B cell (primary cell): ENCODE measurements at regions of chr12 and their contacts with region 1.

Region 1: GRCh38 chr12:4276524-4277204 is 3.1 kb downstream of the CCND2 start:
- DNase-seq: peak; percentile 91
- ATAC-seq: peak; percentile 40
- H3K4me3 ChIP-seq: no peak overlapping the region
- H3K4me3 Mint-ChIP-seq: peak overlapping the region; percentile 99
- H3K27ac ChIP-seq: no peak overlapping the region
- H3K27ac Mint-ChIP-seq: peak overlapping the region; percentile 2
- H3K4me1 ChIP-seq: peaks cover 18 to 37% of the 10 kb centered on the region in 2 donors
- H3K4me1 Mint-ChIP-seq: peaks cover 32% of the 10 kb centered on the region
- H3K27me3 ChIP-seq: no peaks in the 10 kb centered on the region
- H3K27me3 Mint-ChIP-seq: no peaks in the 10 kb centered on the region
- CTCF ChIP-seq: peak; percentile 85

Region 2: GRCh38 chr12:3885277-3886094 is 391.2 kb before region 1 on chr12:
- CTCF ChIA-PET with region 1: interaction called, 396 read pairs
- POLR2A ChIA-PET with region 1: interaction called, 11 read pairs
- intact Hi-C with region 1: no loop called
- DNase-seq: peak; percentile 72
- ATAC-seq: no peak
- H3K4me3 ChIP-seq: no peak overlapping the region
- H3K4me3 Mint-ChIP-seq: no peak overlapping the region
- H3K27ac ChIP-seq: no peak overlapping the region
- H3K27ac Mint-ChIP-seq: no peak overlapping the region
- H3K4me1 ChIP-seq: peaks cover 2 to 7% of the 10 kb centered on the region in 2 donors
- H3K4me1 Mint-ChIP-seq: peaks cover 4% of the 10 kb centered on the region
- H3K27me3 ChIP-seq: peaks cover 0 to 13% (median 6%) of the 10 kb centered on the region in 4 experiments
- H3K27me3 Mint-ChIP-seq: peaks cover 8% of the 10 kb centered on the region
- CTCF ChIP-seq: peak; percentile 88

Region 3: GRCh38 chr12:3998968-3999826 is 277.5 kb before region 1 on chr12:
- CTCF ChIA-PET with region 1: interaction called, 293 read pairs
- POLR2A ChIA-PET with region 1: no interaction called
- intact Hi-C with region 1: loop called (anchors 1 kb)
- DNase-seq: no peak
- ATAC-seq: no peak
- H3K4me3 ChIP-seq: no peak overlapping the region
- H3K4me3 Mint-ChIP-seq: no peak overlapping the region
- H3K27ac ChIP-seq: no peak overlapping the region
- H3K27ac Mint-ChIP-seq: no peak overlapping the region
- H3K4me1 ChIP-seq: peaks cover 4 to 7% of the 10 kb centered on the region in 2 donors
- H3K4me1 Mint-ChIP-seq: peaks cover 4% of the 10 kb centered on the region
- H3K27me3 ChIP-seq: peaks cover 0 to 3% (median under 1%) of the 10 kb centered on the region in 4 experiments
- H3K27me3 Mint-ChIP-seq: peaks cover 4% of the 10 kb centered on the region
- CTCF ChIP-seq: no peak

Region 4: GRCh38 chr12:4112734-4113325 is 163.8 kb before region 1 on chr12:
- CTCF ChIA-PET with region 1: interaction called, 136 read pairs
- POLR2A ChIA-PET with region 1: interaction called, 28 read pairs
- intact Hi-C with region 1: no loop called
- DNase-seq: no peak
- ATAC-seq: no peak
- H3K4me3 ChIP-seq: no peak overlapping the region
- H3K4me3 Mint-ChIP-seq: no peak overlapping the region
- H3K27ac ChIP-seq: no peak overlapping the region
- H3K27ac Mint-ChIP-seq: no peak overlapping the region
- H3K4me1 ChIP-seq: peaks cover 26 to 27% of the 10 kb centered on the region in 2 donors
- H3K4me1 Mint-ChIP-seq: peaks cover 28% of the 10 kb centered on the region
- H3K27me3 ChIP-seq: peaks cover 0 to 5% (median 0%) of the 10 kb centered on the region in 4 experiments
- H3K27me3 Mint-ChIP-seq: peaks cover 4% of the 10 kb centered on the region
- CTCF ChIP-seq: no peak

Region 5: DNA sequence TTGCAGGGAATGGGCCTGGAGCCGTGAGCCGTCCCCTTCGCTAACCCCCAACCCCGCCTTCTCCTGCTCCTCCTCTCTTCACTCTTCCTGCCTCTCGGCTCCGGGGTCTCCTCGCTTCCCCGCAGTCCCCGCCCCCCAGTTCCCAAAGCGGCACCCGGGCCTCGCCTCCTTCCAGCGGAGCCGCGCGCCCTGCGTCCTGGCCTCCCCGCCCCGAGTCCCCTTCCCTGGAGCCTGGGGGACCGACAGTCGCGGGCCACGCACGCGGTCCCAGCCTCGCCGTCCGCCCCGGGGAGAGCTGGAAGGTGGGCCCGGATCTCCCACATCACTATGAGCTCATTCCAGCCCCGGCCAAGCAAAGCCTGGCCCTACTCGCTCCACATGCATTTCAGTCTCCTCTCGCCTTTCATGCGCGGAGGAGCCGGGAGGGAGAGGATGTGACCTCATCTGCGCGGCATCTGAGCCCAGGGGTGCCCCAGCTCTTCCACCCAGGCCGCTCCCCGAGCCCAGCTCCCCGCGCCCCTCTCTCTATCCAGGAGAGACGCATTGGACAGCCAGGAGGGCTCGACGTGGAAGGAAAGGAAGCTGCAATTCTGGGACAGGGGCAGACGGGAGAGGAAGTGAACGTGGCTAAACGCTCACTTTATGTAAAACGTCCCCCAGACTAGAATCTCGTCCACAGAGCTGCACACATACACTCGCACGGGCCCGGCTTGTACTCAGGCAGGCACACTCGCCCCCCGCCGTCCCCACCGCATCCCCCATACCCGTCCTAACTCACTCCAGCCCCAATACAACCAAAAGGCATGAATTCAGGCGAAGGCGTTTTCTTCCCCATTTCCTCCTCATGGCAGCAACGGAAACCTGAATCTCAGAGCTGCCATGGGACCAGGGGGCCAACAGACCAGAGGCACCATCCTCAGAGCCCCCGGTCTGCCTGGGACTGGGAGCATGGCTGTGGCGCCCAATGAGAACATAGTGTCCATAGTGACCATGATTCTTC is 111.8 kb before region 1 on chr12:
- CTCF ChIA-PET with region 1: interaction called, 14 read pairs
- POLR2A ChIA-PET with region 1: interaction called, 5 read pairs
- intact Hi-C with region 1: no loop called
- DNase-seq: peak; percentile 80
- ATAC-seq: peak; percentile 77
- H3K4me3 ChIP-seq: peak overlapping the region; percentile 4 to 75 (median 65)
- H3K4me3 Mint-ChIP-seq: peak overlapping the region; percentile 88
- H3K27ac ChIP-seq: peak overlapping the region; percentile 77 to 95
- H3K27ac Mint-ChIP-seq: peak overlapping the region; percentile 90
- H3K4me1 ChIP-seq: peaks cover 34 to 35% of the 10 kb centered on the region in 2 donors
- H3K4me1 Mint-ChIP-seq: peaks cover 40% of the 10 kb centered on the region
- H3K27me3 ChIP-seq: no peaks in the 10 kb centered on the region
- H3K27me3 Mint-ChIP-seq: no peaks in the 10 kb centered on the region
- CTCF ChIP-seq: no peak

Region 6: DNA sequence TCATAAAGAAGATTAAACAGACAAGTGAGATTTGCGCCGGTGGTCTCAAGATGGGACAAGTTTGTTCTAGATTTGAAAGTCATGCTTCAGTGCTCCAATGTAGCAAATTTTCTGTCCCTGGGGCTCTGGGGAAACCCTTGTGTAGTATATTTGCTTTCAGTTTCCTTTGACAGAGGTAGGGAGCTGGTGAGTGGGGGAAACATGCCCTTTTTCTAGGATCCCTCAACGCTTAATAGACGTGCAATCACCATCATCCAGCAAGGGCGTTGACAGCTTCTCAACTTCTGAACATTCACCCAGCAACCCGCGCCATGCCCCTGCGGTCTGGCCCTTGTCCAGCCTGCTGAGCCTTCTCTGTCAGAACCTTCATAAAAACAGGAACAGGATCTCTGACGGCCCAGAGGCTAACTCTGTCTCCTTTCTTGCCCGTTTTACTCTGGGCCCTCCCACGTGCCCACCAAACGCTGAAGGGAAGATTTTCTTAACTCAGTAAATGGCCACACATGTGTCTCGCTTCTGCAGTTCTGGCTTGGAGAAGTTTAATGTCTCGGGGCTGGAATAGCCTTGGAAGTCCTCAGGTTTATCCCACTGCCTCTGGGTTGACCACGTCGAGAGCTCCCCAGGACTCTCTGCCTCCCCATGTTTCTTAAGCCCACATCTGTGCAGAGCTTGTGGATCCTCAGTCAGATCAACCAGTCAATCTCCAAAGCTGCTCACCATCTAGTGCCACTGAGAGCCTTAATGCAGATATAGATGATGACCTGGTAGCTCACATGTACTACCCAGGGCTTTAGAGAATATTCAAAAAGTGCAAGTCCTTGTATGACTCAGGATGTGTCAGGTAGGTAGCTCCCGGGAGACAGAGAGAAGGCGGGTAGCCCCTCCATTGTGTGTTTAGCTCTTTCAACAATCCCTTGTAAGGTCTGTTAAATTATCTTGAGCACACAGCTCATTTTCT is 61.2 kb before region 1 on chr12:
- CTCF ChIA-PET with region 1: interaction called, 22 read pairs
- POLR2A ChIA-PET with region 1: no interaction called
- intact Hi-C with region 1: loop called (anchors 1 kb)
- DNase-seq: peak; percentile 91
- ATAC-seq: peak; percentile 90
- H3K4me3 ChIP-seq: peak overlapping the region; percentile 28 to 53 (median 34)
- H3K4me3 Mint-ChIP-seq: peak overlapping the region; percentile 87
- H3K27ac ChIP-seq: peak overlapping the region; percentile 89 to 94
- H3K27ac Mint-ChIP-seq: peak overlapping the region; percentile 94
- H3K4me1 ChIP-seq: peaks cover 32 to 41% of the 10 kb centered on the region in 2 donors
- H3K4me1 Mint-ChIP-seq: peaks cover 41% of the 10 kb centered on the region
- H3K27me3 ChIP-seq: no peaks in the 10 kb centered on the region
- H3K27me3 Mint-ChIP-seq: no peaks in the 10 kb centered on the region
- CTCF ChIP-seq: no peak

Region 7: GRCh38 chr12:4320853-4321701 is 44.4 kb after region 1 on chr12 and contains the start of gene TIGAR:
- CTCF ChIA-PET with region 1: interaction called, 8 read pairs
- POLR2A ChIA-PET with region 1: interaction called, 4 read pairs
- intact Hi-C with region 1: loop called (anchors 1 kb)
- DNase-seq: peak; percentile 95
- ATAC-seq: peak; percentile 97
- H3K4me3 ChIP-seq: peak within 1 kb of the TSS; percentile 69 to 98 (median 90)
- H3K4me3 Mint-ChIP-seq: peak within 1 kb of the TSS; percentile 94
- H3K27ac ChIP-seq: peak within 1 kb of the TSS; percentile 90 to 91
- H3K27ac Mint-ChIP-seq: peak within 1 kb of the TSS; percentile 88
- H3K4me1 ChIP-seq: peaks cover 26 to 30% of the 10 kb centered on the region in 2 donors
- H3K4me1 Mint-ChIP-seq: peaks cover 32% of the 10 kb centered on the region
- H3K27me3 ChIP-seq: no peaks in the 10 kb centered on the region
- H3K27me3 Mint-ChIP-seq: no peaks in the 10 kb centered on the region
- CTCF ChIP-seq: no peak
- total RNA-seq, gene TIGAR: 6.6 and 14.2 TPM in 2 replicates

Region 8: DNA sequence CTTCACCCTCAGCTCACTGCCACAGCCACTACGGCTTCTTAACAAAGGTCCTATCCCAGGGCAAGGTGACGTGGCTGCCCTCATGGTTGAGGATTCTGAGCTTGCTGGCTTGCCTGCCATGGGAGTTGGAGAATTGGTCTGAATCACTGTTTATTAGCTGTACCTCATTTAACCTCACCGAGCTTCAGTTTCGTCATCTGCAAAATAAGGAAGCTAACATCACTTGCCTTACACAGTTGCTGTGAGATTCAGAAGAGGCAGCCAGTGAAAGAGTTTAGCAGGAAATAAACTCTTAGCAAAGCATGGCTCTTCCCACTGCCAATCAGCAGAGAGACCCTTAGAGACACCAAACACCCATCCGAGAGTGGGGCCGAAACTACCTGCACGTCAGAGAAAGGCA is 543.0 kb after region 1 on chr12:
- CTCF ChIA-PET with region 1: no interaction called
- POLR2A ChIA-PET with region 1: no interaction called
- intact Hi-C with region 1: no loop called
- DNase-seq: peak; percentile 70
- ATAC-seq: peak; percentile 84
- H3K4me3 ChIP-seq: no peak overlapping the region
- H3K4me3 Mint-ChIP-seq: peak overlapping the region; percentile 67
- H3K27ac ChIP-seq: peak overlapping the region; percentile 42 to 65
- H3K27ac Mint-ChIP-seq: peak overlapping the region; percentile 86
- H3K4me1 ChIP-seq: peaks cover 54 to 64% of the 10 kb centered on the region in 2 donors
- H3K4me1 Mint-ChIP-seq: peaks cover 65% of the 10 kb centered on the region
- H3K27me3 ChIP-seq: peaks cover 0 to 7% (median 0%) of the 10 kb centered on the region in 4 experiments
- H3K27me3 Mint-ChIP-seq: peaks cover 11% of the 10 kb centered on the region
- CTCF ChIP-seq: no peak